A549 (cell line): ENCODE measurements at regions of chr4 and their contacts with region 1.

Region 1: DNA sequence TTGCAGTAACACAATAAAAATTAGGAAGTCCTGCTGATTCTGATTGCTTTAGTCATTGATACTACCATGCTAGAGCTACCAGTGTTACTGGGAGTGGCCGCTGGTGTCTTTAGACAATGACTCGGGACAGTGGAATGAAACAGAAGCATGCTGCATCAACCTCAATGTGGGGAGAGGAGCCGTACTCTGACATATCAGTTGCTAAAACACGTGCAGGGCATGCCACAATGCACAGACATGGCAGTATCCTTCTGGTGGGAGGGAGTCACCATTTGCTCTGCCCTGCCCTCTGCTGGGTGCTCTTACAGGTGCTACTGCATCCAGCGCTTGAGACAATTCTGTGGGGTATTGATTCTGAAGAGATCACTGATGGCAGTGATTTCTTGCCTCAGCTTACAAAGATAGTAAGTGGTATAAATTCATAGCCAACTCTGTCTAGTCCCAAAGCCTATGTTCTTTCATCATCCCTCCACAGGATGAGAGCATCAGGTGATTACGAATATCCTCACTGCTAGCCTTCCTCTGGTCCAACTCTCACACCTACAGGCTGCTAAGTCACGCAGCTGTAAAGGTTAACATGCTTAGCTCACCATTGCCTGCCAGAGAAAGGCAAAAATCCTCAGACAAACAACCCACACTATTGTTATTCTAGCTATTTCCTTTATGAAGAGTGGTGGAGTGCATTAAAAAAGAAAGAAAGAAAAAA is 43.7 kb downstream of the NSG1 start:
- DNase-seq: peak; percentile 48 to 60
- ATAC-seq: peak; percentile 93 to 96
- H3K4me3 ChIP-seq: no peak overlapping the region
- H3K27ac ChIP-seq: no peak overlapping the region
- H3K4me1 ChIP-seq: no peaks in the 10 kb centered on the region
- CTCF ChIP-seq: peak; percentile 46
- EP300 ChIP-seq: no peak
- POLR2A ChIP-seq: no peak
- RAD21 ChIP-seq: peak; percentile 29 to 45; a peak in 2 of 5 replicates

Region 2: GRCh38 chr4:4395849-4396637 is 34.6 kb before region 1 on chr4:
- CTCF ChIA-PET with region 1: interaction called, 10 read pairs
- POLR2A ChIA-PET with region 1: no interaction called
- DNase-seq: no peak
- ATAC-seq: peak; percentile 27 to 47; a peak in 3 of 6 replicates
- H3K4me3 ChIP-seq: no peak overlapping the region
- H3K27ac ChIP-seq: no peak overlapping the region
- H3K4me1 ChIP-seq: peaks cover 10% of the 10 kb centered on the region; the same call in 2 of the 3 replicates
- CTCF ChIP-seq: no peak
- EP300 ChIP-seq: no peak
- POLR2A ChIP-seq: no peak
- RAD21 ChIP-seq: no peak

Region 3: GRCh38 chr4:4461850-4462249 is 31.2 kb after region 1 on chr4:
- CTCF ChIA-PET with region 1: no interaction called
- POLR2A ChIA-PET with region 1: no interaction called
- DNase-seq: no peak
- ATAC-seq: no peak
- H3K4me3 ChIP-seq: no peak overlapping the region
- H3K27ac ChIP-seq: no peak overlapping the region
- H3K4me1 ChIP-seq: no peaks in the 10 kb centered on the region
- CTCF ChIP-seq: no peak
- EP300 ChIP-seq: no peak
- POLR2A ChIP-seq: no peak
- RAD21 ChIP-seq: no peak

Region 4: DNA sequence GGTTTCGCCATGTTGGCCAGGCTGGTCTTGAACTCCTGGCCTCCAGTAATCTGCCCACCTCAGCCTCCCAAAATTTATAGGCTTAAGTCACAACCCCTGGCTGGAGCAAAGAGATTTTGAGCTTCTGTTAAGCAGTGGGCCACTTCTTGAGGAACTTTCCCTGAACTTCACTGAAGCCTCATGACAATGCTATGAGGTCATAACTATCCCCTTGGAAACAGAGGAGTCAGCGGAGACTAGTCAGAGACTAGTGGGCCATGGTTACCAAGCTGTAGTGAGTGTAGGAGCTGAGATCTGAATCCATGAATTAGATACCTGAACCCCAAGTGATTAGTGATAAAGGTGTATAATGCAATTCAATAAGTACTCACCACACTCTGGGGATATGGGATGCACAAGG is 283.7 kb after region 1 on chr4:
- CTCF ChIA-PET with region 1: no interaction called
- POLR2A ChIA-PET with region 1: no interaction called
- DNase-seq: no peak
- ATAC-seq: no peak
- H3K4me3 ChIP-seq: no peak overlapping the region
- H3K27ac ChIP-seq: no peak overlapping the region
- H3K4me1 ChIP-seq: no peaks in the 10 kb centered on the region
- CTCF ChIP-seq: no peak
- EP300 ChIP-seq: no peak
- POLR2A ChIP-seq: no peak
- RAD21 ChIP-seq: no peak